ENCODE measurements at regions of chr5 and their contacts with region 1.

Region 1: DNA sequence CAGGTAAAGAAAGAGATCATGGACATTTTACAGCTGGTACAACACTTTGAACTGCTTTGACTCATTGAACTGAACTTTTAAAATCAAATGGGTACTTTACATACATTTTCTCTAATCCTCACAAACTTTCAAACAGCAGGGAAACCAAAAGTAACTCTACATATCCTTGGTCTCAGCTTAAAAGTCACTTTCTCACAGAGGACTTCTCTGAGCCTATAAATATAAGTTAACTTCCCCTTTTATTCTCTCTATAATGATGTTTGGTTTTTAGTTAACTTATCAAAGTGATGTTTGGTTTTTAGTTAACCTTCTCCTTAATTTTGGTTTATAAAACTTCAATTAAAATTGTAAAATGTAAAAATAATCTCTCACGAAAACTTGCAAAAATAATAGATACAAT is 209.8 kb downstream of the MCTP1 start:
- DNase-seq: no peak
- ATAC-seq: no peak
- H3K4me3 ChIP-seq: no peak overlapping the region
- H3K27ac ChIP-seq: no peak overlapping the region
- H3K4me1 ChIP-seq: peaks cover 13% of the 10 kb centered on the region
- H3K27me3 ChIP-seq: no peaks in the 10 kb centered on the region
- CTCF ChIP-seq: no peak

Region 2: DNA sequence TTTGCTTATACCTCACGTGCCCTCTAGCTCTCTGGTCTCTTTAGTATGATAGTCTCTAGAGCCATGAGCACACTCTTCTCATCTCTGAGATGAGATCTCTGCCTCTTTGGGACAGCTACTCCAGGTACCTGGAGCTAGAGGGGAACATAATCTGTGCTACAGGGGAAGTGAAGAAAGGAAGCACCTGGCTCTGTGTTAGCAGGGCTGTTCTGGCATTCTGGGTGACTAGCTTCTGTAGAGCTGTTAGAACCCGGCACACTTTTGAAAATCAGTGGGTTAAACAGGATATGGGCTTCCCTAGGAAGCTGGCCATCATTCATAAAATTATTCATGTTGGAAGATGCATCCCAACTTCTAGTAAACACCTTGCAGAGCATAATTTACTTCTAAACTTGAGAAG is 15.0 kb before region 1 on chr5:
- CTCF ChIA-PET with region 1: no interaction called
- POLR2A ChIA-PET with region 1: interaction called, 14 read pairs
- in situ Hi-C with region 1: no loop called
- intact Hi-C with region 1: no loop called
- DNase-seq: no peak
- ATAC-seq: no peak
- H3K4me3 ChIP-seq: no peak overlapping the region
- H3K27ac ChIP-seq: no peak overlapping the region
- H3K4me1 ChIP-seq: no peaks in the 10 kb centered on the region
- H3K27me3 ChIP-seq: no peaks in the 10 kb centered on the region
- CTCF ChIP-seq: no peak

Region 3: GRCh38 chr5:95238560-95239325 is 163.6 kb after region 1 on chr5:
- CTCF ChIA-PET with region 1: no interaction called
- POLR2A ChIA-PET with region 1: no interaction called
- in situ Hi-C with region 1: no loop called
- intact Hi-C with region 1: loop called (anchors 5 kb)
- DNase-seq: peak; percentile 32
- ATAC-seq: peak; percentile 92
- H3K4me3 ChIP-seq: no peak overlapping the region
- H3K27ac ChIP-seq: no peak overlapping the region
- H3K4me1 ChIP-seq: no peaks in the 10 kb centered on the region
- H3K27me3 ChIP-seq: peaks cover 8% of the 10 kb centered on the region; the same call in 1 of the 2 replicates
- CTCF ChIP-seq: peak; percentile 66

Region 4: GRCh38 chr5:95422838-95423237 is 347.7 kb after region 1 on chr5:
- CTCF ChIA-PET with region 1: no interaction called
- POLR2A ChIA-PET with region 1: no interaction called
- in situ Hi-C with region 1: no loop called
- intact Hi-C with region 1: no loop called
- DNase-seq: no peak
- ATAC-seq: no peak
- H3K4me3 ChIP-seq: no peak overlapping the region
- H3K27ac ChIP-seq: no peak overlapping the region
- H3K4me1 ChIP-seq: no peaks in the 10 kb centered on the region
- H3K27me3 ChIP-seq: no peaks in the 10 kb centered on the region
- CTCF ChIP-seq: no peak

Measured in Panc1 (cell line).